ENCODE measurements at regions of chr9 and their contacts with region 1.

Region 1: DNA sequence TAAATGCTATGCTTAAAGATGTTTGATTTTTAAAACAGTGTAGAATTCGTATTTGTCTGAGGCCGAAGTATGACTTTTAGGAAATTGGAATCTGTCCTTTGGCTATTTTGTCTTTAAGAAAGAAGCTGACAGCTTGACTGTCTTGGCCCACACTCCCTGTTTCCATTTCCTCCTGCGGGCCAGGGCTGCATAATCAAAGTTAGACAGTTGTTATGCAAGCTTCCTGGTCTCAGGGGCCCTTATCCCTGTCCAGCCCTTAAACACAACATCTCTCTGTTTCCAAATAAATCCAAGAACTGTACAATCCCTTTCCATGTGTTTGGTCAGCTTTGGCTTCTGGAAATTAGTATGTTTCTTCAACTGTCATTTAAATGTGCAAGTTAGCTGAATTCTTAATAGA is 54.6 kb upstream of the ECM2 start:
- DNase-seq: peak in 1 of 2 donors; percentile 77
- ATAC-seq: peak; percentile 92
- H3K4me3 ChIP-seq: no peak overlapping the region
- H3K27ac ChIP-seq: peak overlapping the region in 1 of 2 donors; percentile 43
- H3K4me1 ChIP-seq: peaks cover 2 to 11% of the 10 kb centered on the region in 2 donors
- H3K27me3 ChIP-seq: no peaks in the 10 kb centered on the region

Region 2: GRCh38 chr9:92547356-92547755 is 43.0 kb before region 1 on chr9:
- intact Hi-C with region 1: loop called in 1 of 2 experiments (anchors 2 kb)
- DNase-seq: no peak
- ATAC-seq: no peak
- H3K4me3 ChIP-seq: no peak overlapping the region
- H3K27ac ChIP-seq: no peak overlapping the region
- H3K4me1 ChIP-seq: no peaks in the 10 kb centered on the region
- H3K27me3 ChIP-seq: no peaks in the 10 kb centered on the region

Region 3: GRCh38 chr9:92738661-92739081 is 148.3 kb after region 1 on chr9:
- intact Hi-C with region 1: no loop called
- DNase-seq: peak in 1 of 2 donors; percentile 61
- ATAC-seq: no peak
- H3K4me3 ChIP-seq: no peak overlapping the region
- H3K27ac ChIP-seq: peak overlapping the region in 1 of 2 donors; percentile 9
- H3K4me1 ChIP-seq: peaks cover 0 to 3% of the 10 kb centered on the region in 2 donors
- H3K27me3 ChIP-seq: no peaks in the 10 kb centered on the region